Spleen (tissue), 13 donors: ENCODE measurements at regions of chr3 and their contacts with region 1.

Region 1: GRCh38 chr3:57597122-57597923 is at the start of gene ARF4:
- DNase-seq: peak; percentile 100
- H3K4me3 ChIP-seq: peak within 1 kb of the TSS; percentile 68 to 88 (median 80)
- H3K27ac ChIP-seq: peak within 1 kb of the TSS; percentile 95 to 99 (median 98)
- H3K4me1 ChIP-seq: peaks cover 32 to 65% (median 55%) of the 10 kb centered on the region in 6 donors
- H3K27me3 ChIP-seq: no peaks in the 10 kb centered on the region
- CTCF ChIP-seq: peak in 8 of 11 experiments; percentile 3 to 67 (median 54)
- POLR2A ChIP-seq: peak; percentile 85 to 95 (median 88)
- total RNA-seq, gene ARF4: 68.1 to 88.7 (median 75.0) TPM

Region 2: GRCh38 chr3:57555738-57556458 is 41.4 kb before region 1 on chr3 and contains the start of gene PDE12:
- intact Hi-C with region 1: loop called (anchors 5 kb)
- DNase-seq: peak; percentile 95
- H3K4me3 ChIP-seq: peak within 1 kb of the TSS; percentile 74 to 96 (median 80)
- H3K27ac ChIP-seq: peak within 1 kb of the TSS; percentile 90 to 96 (median 92)
- H3K4me1 ChIP-seq: peaks cover 23 to 58% (median 42%) of the 10 kb centered on the region in 6 donors
- H3K27me3 ChIP-seq: no peaks in the 10 kb centered on the region
- CTCF ChIP-seq: peak in 3 of 11 experiments; percentile 5 to 30 (median 13)
- POLR2A ChIP-seq: peak in 2 of 3 donors; percentile 6 to 20
- total RNA-seq, gene PDE12: 16.7 to 23.9 (median 19.5) TPM